ENCODE measurements at regions of chr6 and their contacts with region 1.

Region 1: GRCh38 chr6:55239099-55239498 is 64.8 kb downstream of the HCRTR2 start:
- DNase-seq: no peak
- ATAC-seq: peak; percentile 45

Region 2: DNA sequence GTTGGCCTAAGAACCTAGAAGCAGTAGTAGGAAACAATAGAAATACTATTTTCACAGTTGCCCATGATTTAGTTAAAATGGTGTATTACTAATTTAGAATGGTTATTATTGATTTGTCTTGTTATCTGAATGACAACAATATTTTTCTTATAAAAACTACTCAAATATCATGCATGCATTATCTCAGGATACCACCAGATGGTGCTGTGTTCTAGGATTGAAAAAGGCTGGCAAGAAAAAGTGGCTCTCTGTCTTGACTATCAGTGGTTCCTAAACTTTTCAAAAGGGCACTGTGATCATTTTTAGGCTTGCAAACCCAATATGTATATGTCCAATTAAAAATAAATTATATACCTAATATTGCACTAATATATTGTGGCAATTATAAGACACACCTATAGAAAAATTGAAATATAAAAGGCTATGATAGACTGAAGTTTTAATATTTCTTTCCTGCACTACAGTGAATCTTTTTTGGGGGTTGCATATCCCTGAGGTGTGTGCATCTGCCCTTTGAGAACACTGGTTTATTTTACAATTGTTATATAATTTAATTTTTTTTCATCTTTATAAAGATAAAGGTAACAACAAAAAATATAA is 1259.5 kb before region 1 on chr6:
- intact Hi-C with region 1: loop called (anchors 10 kb)
- DNase-seq: no peak
- ATAC-seq: peak; percentile 54

Region 3: DNA sequence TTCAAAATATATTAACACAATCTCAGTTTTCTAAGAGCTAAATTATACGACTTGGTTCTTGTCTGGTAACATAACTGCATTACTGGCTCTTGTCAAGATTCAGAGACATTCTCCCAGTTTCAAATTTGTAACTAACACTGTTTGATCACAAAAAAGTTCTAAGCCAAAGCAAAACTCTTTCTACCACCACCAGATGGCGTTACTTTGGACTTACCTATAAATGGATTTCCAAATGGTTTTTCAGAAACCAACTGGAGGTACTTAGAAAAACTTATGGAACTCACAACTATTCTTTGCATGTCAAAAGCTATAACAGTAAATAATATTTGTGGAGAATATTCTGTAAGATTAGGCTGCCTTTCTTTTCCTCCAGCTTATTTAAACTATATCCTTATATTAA is 54.0 kb after region 1 on chr6:
- intact Hi-C with region 1: no loop called
- DNase-seq: no peak
- ATAC-seq: no peak